CD14-positive monocyte (primary cell): ENCODE measurements at regions of chr21 and their contacts with region 1.

Region 1: GRCh38 chr21:37375866-37376574 is 9.4 kb downstream of the DYRK1A start:
- DNase-seq: no peak
- H3K4me3 ChIP-seq: no peak overlapping the region
- H3K4me3 Mint-ChIP-seq: no peak overlapping the region
- H3K27ac ChIP-seq: peak overlapping the region in 1 of 2 donors; percentile 52
- H3K27ac Mint-ChIP-seq: peak overlapping the region in 5 of 7 donors; percentile 25 to 89 (median 72)
- H3K4me1 ChIP-seq: peaks cover 20 to 63% of the 10 kb centered on the region in 2 donors
- H3K4me1 Mint-ChIP-seq: peaks cover 80% of the 10 kb centered on the region
- H3K27me3 ChIP-seq: no peaks in the 10 kb centered on the region
- H3K27me3 Mint-ChIP-seq: no peaks in the 10 kb centered on the region
- CTCF ChIP-seq: no peak

Region 2: GRCh38 chr21:37338671-37339551 is 37.1 kb before region 1 on chr21:
- intact Hi-C with region 1: no loop called
- DNase-seq: peak in 1 of 3 donors; percentile 43
- H3K4me3 ChIP-seq: no peak overlapping the region
- H3K4me3 Mint-ChIP-seq: no peak overlapping the region
- H3K27ac ChIP-seq: no peak overlapping the region
- H3K27ac Mint-ChIP-seq: no peak overlapping the region
- H3K4me1 ChIP-seq: no peaks in the 10 kb centered on the region
- H3K4me1 Mint-ChIP-seq: peaks cover 2% of the 10 kb centered on the region
- H3K27me3 ChIP-seq: no peaks in the 10 kb centered on the region
- H3K27me3 Mint-ChIP-seq: peaks cover 0 to 2% (median 0%) of the 10 kb centered on the region in 3 donors
- CTCF ChIP-seq: no peak

Region 3: DNA sequence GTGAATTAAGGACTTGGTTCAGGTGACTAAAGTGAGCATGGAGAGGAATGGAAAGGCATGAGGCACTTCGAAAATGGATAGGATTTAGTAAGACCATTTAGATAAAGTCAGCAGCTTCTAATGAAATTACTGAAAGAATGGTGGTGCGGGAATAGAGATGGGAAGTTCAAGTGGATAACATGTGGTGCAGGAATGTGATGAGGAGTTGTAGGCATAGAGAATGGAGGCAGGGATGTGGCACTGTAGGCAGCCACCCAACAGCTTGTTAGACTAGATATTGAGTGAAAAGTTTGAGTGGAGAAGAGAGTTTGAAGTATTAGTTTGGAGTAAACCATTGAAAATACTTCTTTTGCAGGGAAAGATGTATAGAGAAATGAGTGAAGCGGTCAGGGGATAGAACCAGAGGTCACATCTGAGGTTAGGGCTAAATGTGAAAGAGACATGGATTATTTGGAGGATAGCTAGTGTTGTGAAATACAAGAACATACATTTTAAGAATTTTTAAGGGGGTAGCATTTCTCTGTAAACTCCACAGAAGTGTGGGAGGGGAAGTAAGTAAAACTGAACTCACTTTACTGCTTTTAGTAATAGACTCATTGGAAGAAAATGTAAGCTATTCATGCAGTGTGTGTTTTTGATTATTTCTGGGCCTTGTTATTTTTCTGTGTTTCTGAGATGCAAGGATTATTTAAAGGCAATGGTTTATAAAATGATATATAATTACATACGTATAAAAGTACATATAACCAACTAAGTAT is 36.8 kb after region 1 on chr21:
- intact Hi-C with region 1: loop called in 1 of 2 experiments (anchors 5 kb)
- DNase-seq: no peak
- H3K4me3 ChIP-seq: no peak overlapping the region
- H3K4me3 Mint-ChIP-seq: no peak overlapping the region
- H3K27ac ChIP-seq: peak overlapping the region in 1 of 2 donors; percentile 59
- H3K27ac Mint-ChIP-seq: peak overlapping the region in 6 of 7 donors; percentile 15 to 72 (median 42)
- H3K4me1 ChIP-seq: peaks cover 16 to 31% of the 10 kb centered on the region in 2 donors
- H3K4me1 Mint-ChIP-seq: peaks cover 63% of the 10 kb centered on the region
- H3K27me3 ChIP-seq: no peaks in the 10 kb centered on the region
- H3K27me3 Mint-ChIP-seq: peaks cover 0 to 1% (median 0%) of the 10 kb centered on the region in 3 donors
- CTCF ChIP-seq: no peak